CD14-positive monocyte (primary cell): ENCODE measurements at regions of chr19 and their contacts with region 1.

Region 1: GRCh38 chr19:58009666-58010371 is 7.2 kb upstream of the ZNF606 start:
- DNase-seq: peak; percentile 65 to 75 (median 65)
- H3K4me3 ChIP-seq: peak overlapping the region; percentile 26 to 78 (median 40)
- H3K4me3 Mint-ChIP-seq: peak overlapping the region; percentile 75 to 85
- H3K27ac ChIP-seq: no peak overlapping the region
- H3K27ac Mint-ChIP-seq: peak overlapping the region in 3 of 7 donors; percentile 20 to 75 (median 46)
- H3K4me1 ChIP-seq: peaks cover 10 to 12% of the 10 kb centered on the region in 2 donors
- H3K4me1 Mint-ChIP-seq: peaks cover 17% of the 10 kb centered on the region
- H3K27me3 ChIP-seq: no peaks in the 10 kb centered on the region
- H3K27me3 Mint-ChIP-seq: peaks cover 0 to 22% (median 10%) of the 10 kb centered on the region in 3 donors
- CTCF ChIP-seq: no peak

Region 2: DNA sequence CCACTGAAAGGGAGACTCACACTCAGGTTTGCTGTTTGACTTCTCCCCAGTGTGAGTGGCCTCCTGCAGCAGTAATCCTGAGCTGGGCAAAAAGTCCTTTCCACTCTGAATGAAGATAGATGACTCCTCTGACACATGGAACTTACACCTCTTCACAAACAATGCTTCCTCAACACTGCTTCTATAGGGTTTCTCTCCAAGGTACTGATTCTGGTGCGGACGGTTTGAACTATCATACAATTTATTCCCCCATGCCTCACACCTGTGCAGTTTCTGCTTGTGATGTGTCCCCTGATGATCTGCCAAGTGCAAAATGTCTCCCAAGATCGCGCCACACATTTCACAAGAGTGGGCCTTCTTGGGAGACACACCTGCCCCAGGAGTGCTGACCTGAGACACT is 82.2 kb before region 1 on chr19:
- intact Hi-C with region 1: no loop called
- DNase-seq: no peak
- H3K4me3 ChIP-seq: peak overlapping the region in 1 of 3 experiments; percentile 4
- H3K4me3 Mint-ChIP-seq: no peak overlapping the region
- H3K27ac ChIP-seq: no peak overlapping the region
- H3K27ac Mint-ChIP-seq: no peak overlapping the region
- H3K4me1 ChIP-seq: no peaks in the 10 kb centered on the region
- H3K4me1 Mint-ChIP-seq: no peaks in the 10 kb centered on the region
- H3K27me3 ChIP-seq: no peaks in the 10 kb centered on the region
- H3K27me3 Mint-ChIP-seq: peaks cover 0 to 2% (median 0%) of the 10 kb centered on the region in 3 donors
- CTCF ChIP-seq: no peak

Region 3: DNA sequence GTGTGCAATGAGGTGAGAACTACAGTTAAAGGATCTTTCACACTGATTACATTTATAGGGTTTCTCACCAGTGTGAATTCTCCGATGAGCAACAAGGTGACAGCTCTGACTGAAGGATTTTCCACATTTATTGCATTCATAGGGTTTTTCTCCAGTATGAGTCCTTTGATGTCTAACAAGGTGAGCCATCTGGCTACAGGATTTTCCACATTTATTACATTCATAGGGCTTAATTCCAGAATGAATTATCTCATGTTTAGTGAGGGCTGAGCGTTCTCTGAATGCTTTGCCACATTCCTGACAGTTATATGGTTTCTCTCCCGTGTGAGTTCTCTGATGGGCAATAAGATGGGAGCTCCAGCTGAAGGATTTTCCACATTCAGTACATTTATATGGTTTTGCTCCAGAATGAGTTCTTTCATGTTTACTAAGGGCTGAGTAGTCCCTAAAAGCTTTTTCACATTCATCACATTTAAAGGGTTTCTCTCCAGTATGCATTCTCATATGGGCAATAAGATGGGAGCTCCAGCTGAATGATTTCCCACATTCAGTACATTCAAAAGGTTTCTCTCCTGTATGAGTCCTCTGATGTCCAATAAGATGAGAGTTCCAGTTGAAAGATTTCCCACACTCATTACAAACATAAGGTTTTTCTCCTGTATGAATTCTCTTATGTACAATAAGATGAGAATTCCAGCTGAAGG is 31.1 kb before region 1 on chr19:
- intact Hi-C with region 1: loop called in 1 of 2 experiments (anchors 5 kb)
- DNase-seq: no peak
- H3K4me3 ChIP-seq: peak overlapping the region in 1 of 3 experiments; percentile 37
- H3K4me3 Mint-ChIP-seq: no peak overlapping the region
- H3K27ac ChIP-seq: no peak overlapping the region
- H3K27ac Mint-ChIP-seq: no peak overlapping the region
- H3K4me1 ChIP-seq: no peaks in the 10 kb centered on the region
- H3K4me1 Mint-ChIP-seq: no peaks in the 10 kb centered on the region
- H3K27me3 ChIP-seq: no peaks in the 10 kb centered on the region
- H3K27me3 Mint-ChIP-seq: no peaks in the 10 kb centered on the region
- CTCF ChIP-seq: no peak

Region 4: DNA sequence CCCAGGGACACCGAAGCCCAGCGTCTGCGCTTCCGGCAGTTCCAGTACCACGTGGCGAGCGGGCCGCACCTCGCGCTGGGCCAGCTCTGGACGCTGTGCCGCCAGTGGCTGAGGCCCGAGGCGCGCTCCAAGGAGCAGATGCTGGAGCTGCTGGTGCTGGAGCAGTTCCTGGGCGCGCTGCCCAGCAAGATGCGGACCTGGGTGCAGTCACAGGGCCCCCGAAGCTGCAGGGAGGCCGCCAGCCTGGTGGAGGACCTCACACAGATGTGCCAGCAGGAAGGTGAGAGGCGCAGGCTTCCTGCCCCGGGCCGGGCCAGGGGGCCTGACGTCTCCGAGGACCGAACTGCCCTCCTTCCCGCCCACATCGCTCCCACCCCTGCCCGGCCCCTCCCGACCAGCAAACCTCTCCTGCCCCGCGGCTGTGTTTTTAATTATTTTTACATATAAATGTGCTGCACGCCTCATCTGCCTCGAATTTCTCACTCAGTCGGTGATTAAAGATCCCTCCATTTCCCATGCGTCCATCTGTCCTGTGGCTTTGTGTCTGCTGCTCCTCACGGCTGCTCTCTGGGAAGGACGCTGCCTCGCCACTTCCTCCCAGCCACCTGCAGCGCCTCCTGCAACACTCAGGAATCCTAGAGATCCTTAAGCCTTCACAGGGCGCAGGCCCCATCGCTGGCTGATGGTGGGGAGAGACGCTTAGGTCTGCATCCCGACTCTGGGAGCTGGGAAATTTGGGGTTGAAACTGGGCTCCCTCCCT is 28.3 kb after region 1 on chr19:
- intact Hi-C with region 1: loop called in 1 of 2 experiments (anchors 2 kb)
- DNase-seq: no peak
- H3K4me3 ChIP-seq: no peak overlapping the region
- H3K4me3 Mint-ChIP-seq: no peak overlapping the region
- H3K27ac ChIP-seq: no peak overlapping the region
- H3K27ac Mint-ChIP-seq: no peak overlapping the region
- H3K4me1 ChIP-seq: no peaks in the 10 kb centered on the region
- H3K4me1 Mint-ChIP-seq: peaks cover 2% of the 10 kb centered on the region
- H3K27me3 ChIP-seq: peaks cover 0 to 10% of the 10 kb centered on the region in 2 donors
- H3K27me3 Mint-ChIP-seq: peaks cover 16 to 31% (median 25%) of the 10 kb centered on the region in 3 donors
- CTCF ChIP-seq: no peak